Activated CD4-positive, alpha-beta memory T cell treated with anti-CD3 and anti-CD28 coated beads for 36 hours (primary cell): ENCODE measurements at regions of chr12 and their contacts with region 1.

Region 1: DNA sequence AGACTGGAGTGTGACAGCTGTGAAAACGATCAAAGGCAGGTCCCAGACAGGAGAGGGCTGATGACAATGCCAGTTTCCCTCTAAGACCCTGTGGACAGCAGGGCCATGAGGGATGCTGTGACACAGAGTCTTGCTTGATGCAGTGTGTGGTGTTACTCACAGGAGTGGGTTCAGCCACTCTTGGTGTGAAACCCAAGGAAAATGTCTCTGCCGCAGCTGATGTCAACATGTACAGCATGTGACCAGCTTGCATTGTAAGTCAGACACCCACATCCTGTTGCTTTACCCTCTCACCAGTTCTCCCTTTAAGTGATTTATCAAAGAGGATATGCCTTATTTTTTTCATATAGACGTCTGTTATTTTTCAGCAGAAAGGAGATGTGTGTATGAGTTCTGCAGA is 268.6 kb downstream of the BTG1 start:
- DNase-seq: peak; percentile 91
- H3K4me3 Mint-ChIP-seq: peak overlapping the region; percentile 71
- H3K27ac Mint-ChIP-seq: peak overlapping the region; percentile 94
- H3K4me1 Mint-ChIP-seq: peaks cover 67% of the 10 kb centered on the region
- H3K27me3 Mint-ChIP-seq: no peaks in the 10 kb centered on the region

Region 2: GRCh38 chr12:91651728-91652127 is 225.3 kb before region 1 on chr12:
- CTCF ChIA-PET with region 1: no interaction called
- POLR2A ChIA-PET with region 1: no interaction called
- intact Hi-C with region 1: no loop called
- DNase-seq: no peak
- H3K4me3 Mint-ChIP-seq: no peak overlapping the region
- H3K27ac Mint-ChIP-seq: no peak overlapping the region
- H3K4me1 Mint-ChIP-seq: no peaks in the 10 kb centered on the region
- H3K27me3 Mint-ChIP-seq: peaks cover 1% of the 10 kb centered on the region

Region 3: DNA sequence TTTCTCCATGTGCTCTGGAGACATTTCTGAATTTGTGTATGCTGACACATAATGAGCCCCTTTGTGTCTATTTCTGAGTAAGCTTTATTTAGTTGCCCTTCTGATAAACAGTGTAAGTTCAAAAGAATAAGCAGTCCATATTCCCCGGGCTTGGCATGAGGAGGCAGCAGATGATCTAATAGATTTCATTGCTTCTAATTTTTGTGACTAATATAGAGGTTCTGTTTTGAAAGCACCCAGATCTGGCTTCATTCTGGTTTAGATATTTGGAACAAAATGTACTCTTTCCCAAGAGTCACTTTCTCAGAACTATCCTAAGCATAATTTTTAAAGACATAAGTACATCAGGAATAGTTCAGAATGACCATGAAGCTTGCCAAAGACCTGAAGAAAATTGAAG is 22.3 kb before region 1 on chr12:
- CTCF ChIA-PET with region 1: interaction called, 3 read pairs
- POLR2A ChIA-PET with region 1: no interaction called
- intact Hi-C with region 1: loop called (anchors 1 kb)
- DNase-seq: no peak
- H3K4me3 Mint-ChIP-seq: no peak overlapping the region
- H3K27ac Mint-ChIP-seq: no peak overlapping the region
- H3K4me1 Mint-ChIP-seq: peaks cover 31% of the 10 kb centered on the region
- H3K27me3 Mint-ChIP-seq: no peaks in the 10 kb centered on the region

Region 4: DNA sequence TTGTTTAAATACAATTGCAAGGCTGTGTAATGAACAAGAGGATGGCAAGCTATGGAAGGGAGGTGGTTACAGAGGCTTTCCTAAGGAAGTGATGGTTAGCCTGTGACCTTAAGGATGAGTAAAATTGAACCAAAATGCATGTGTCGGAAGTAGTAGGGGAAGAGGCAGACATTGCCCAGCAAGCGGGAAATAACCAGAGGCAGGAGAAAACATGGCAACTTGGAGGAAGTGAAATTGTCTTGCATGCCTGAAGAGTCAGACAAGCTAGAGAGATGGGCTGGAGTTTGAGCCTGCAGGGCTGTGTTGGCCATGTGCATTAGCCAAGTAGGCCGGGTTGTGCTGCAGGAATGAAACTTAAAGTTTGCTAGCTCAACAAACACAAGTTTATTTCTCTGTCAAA is 172.4 kb after region 1 on chr12:
- CTCF ChIA-PET with region 1: no interaction called
- POLR2A ChIA-PET with region 1: no interaction called
- intact Hi-C with region 1: loop called (anchors 5 kb)
- DNase-seq: no peak
- H3K4me3 Mint-ChIP-seq: no peak overlapping the region
- H3K27ac Mint-ChIP-seq: no peak overlapping the region
- H3K4me1 Mint-ChIP-seq: peaks cover 70% of the 10 kb centered on the region
- H3K27me3 Mint-ChIP-seq: no peaks in the 10 kb centered on the region

Region 5: DNA sequence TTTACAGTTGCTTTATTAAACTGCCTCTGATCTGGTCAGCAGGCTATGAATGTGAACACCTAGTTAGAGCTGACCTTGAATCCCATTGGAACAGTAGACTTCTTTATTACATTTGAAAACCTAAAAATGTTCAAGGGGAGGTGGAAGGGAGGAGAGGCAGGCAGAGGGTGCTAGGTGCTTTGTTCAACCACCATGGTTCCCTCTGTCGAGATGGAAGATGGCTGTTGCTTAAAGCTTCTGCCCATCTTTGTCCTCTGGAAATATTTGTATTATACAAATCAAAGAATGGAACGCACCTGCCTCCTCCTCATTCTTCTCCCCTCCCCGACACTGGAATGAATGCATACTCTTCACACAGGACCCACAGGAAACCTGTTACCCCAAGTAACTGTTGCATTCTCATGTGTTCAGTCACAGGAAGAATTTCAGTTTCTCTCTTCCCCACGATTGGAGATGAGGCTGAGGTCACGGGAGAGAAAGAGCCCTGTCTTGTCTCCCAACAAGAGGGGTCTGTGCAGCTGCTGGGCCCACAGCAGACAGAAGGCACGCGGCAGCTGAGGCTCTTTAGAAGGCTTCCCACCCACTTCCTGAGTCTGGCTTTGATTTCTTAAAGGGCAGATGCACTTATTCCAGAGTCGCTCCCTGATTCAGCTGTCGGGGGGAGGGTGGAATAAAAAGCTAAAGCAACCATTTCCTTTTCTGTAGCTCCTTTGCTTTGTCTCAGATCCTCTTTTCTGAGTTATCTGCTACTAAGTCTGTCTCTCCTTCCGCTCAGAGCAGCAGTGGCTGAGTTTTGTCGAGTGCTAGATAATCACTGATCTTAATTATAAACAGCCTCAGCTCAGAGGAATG is 486.5 kb after region 1 on chr12:
- CTCF ChIA-PET with region 1: no interaction called
- POLR2A ChIA-PET with region 1: no interaction called
- intact Hi-C with region 1: loop called (anchors 5 kb)
- DNase-seq: peak; percentile 55
- H3K4me3 Mint-ChIP-seq: peak overlapping the region; percentile 74
- H3K27ac Mint-ChIP-seq: peak overlapping the region; percentile 87
- H3K4me1 Mint-ChIP-seq: peaks cover 56% of the 10 kb centered on the region
- H3K27me3 Mint-ChIP-seq: no peaks in the 10 kb centered on the region

Region 6: GRCh38 chr12:92505254-92506231 is 628.5 kb after region 1 on chr12:
- CTCF ChIA-PET with region 1: no interaction called
- POLR2A ChIA-PET with region 1: no interaction called
- intact Hi-C with region 1: loop called (anchors 1 kb)
- DNase-seq: peak; percentile 75
- H3K4me3 Mint-ChIP-seq: peak overlapping the region; percentile 69
- H3K27ac Mint-ChIP-seq: peak overlapping the region; percentile 96
- H3K4me1 Mint-ChIP-seq: peaks cover 51% of the 10 kb centered on the region
- H3K27me3 Mint-ChIP-seq: no peaks in the 10 kb centered on the region